H1 (cell line): ENCODE measurements at regions of chr1 and their contacts with region 1.

Region 1: GRCh38 chr1:46718727-46719622 is at the start of gene EFCAB14:
- DNase-seq: peak; percentile 96 to 100
- H3K4me3 ChIP-seq: peak within 1 kb of the TSS; percentile 75 to 95 (median 86)
- H3K27ac ChIP-seq: peak within 1 kb of the TSS; percentile 51; the same call in 1 of the 2 replicates
- H3K4me1 ChIP-seq: peaks cover 5 to 22% (median 10%) of the 10 kb centered on the region in 4 experiments
- H3K27me3 ChIP-seq: no peaks in the 10 kb centered on the region; a peak in 1 of 7 replicates
- CTCF ChIP-seq: 0 out of 4 replicates have a peak, but pooled peaks of 1 of the 3 experiments have one; percentile 6
- EP300 ChIP-seq: no peak
- POLR2A ChIP-seq: peak in 1 of 2 experiments; percentile 70; a peak in 2 of 3 replicates
- RAD21 ChIP-seq: peak in 1 of 2 experiments; percentile 0; a peak in 1 of 4 replicates
- total RNA-seq, gene EFCAB14: 36.9 and 40.4 TPM in 2 replicates

Region 2: GRCh38 chr1:46708121-46708520 is 10.9 kb before region 1 on chr1:
- CTCF ChIA-PET with region 1: no interaction called
- POLR2A ChIA-PET with region 1: interaction called, 11 read pairs
- DNase-seq: no peak
- H3K4me3 ChIP-seq: no peak overlapping the region
- H3K27ac ChIP-seq: no peak overlapping the region
- H3K4me1 ChIP-seq: no peaks in the 10 kb centered on the region
- H3K27me3 ChIP-seq: no peaks in the 10 kb centered on the region
- CTCF ChIP-seq: no peak
- EP300 ChIP-seq: no peak
- POLR2A ChIP-seq: no peak
- RAD21 ChIP-seq: no peak